SK-N-SH (cell line): ENCODE measurements at regions of chr19 and their contacts with region 1.

Region 1: DNA sequence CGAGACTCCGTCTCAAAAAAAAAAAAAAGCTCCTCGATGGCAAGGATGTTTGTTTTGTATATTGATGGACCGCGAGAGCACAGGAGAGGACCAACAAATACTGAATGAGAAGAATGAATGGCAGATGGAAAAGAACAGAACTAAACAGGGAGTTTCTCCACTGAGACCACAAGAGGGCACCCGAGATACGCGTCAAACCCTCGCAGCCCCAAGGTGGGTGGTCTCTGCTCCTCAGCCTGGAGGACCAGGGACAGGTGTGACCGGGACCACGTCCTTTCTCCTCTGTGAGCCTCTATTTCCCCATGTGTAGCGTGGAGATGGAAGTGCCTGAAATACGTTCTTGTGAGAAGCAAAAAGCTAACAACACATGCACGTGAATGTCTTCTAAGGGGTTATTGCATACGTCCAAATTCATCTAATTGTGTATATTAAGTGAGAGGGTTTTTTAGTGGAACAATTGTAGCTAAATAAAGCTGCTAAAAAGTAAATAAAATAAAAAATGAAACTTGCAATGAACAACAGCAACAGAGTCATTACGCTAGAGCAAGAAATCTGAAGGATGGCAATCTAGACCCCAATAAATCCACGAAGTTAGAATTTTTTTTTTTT is 8.3 kb upstream of the CDC42EP5 start:
- DNase-seq: peak; percentile 65
- H3K4me3 ChIP-seq: peak overlapping the region in 1 of 2 experiments; percentile 11; a peak in 1 of 4 replicates
- H3K27ac ChIP-seq: no peak overlapping the region
- H3K4me1 ChIP-seq: no peaks in the 10 kb centered on the region
- H3K27me3 ChIP-seq: peaks cover 60% of the 10 kb centered on the region
- CTCF ChIP-seq: peak; percentile 70
- EP300 ChIP-seq: no peak
- RAD21 ChIP-seq: peak; percentile 58

Region 2: GRCh38 chr19:54470991-54471782 is 10.2 kb before region 1 on chr19:
- CTCF ChIA-PET with region 1: interaction called, 13 read pairs
- POLR2A ChIA-PET with region 1: no interaction called
- DNase-seq: no peak
- H3K4me3 ChIP-seq: peak overlapping the region; percentile 29 to 50; a peak in 2 of 4 replicates
- H3K27ac ChIP-seq: no peak overlapping the region
- H3K4me1 ChIP-seq: no peaks in the 10 kb centered on the region; a peak in 1 of 4 replicates
- H3K27me3 ChIP-seq: peaks cover 18% of the 10 kb centered on the region
- CTCF ChIP-seq: no peak
- EP300 ChIP-seq: no peak
- RAD21 ChIP-seq: no peak

Region 3: GRCh38 chr19:54561840-54562239 is 80.4 kb after region 1 on chr19:
- CTCF ChIA-PET with region 1: no interaction called
- POLR2A ChIA-PET with region 1: no interaction called
- DNase-seq: no peak
- H3K4me3 ChIP-seq: peak overlapping the region; percentile 29 to 44; a peak in 3 of 4 replicates
- H3K27ac ChIP-seq: no peak overlapping the region
- H3K4me1 ChIP-seq: no peaks in the 10 kb centered on the region
- H3K27me3 ChIP-seq: peaks cover 4% of the 10 kb centered on the region; the same call in 1 of the 2 replicates
- CTCF ChIP-seq: no peak
- EP300 ChIP-seq: no peak
- RAD21 ChIP-seq: no peak